Posterior cingulate gyrus (tissue), 11 donors: ENCODE measurements at regions of chrX and their contacts with region 1.

Region 1: DNA sequence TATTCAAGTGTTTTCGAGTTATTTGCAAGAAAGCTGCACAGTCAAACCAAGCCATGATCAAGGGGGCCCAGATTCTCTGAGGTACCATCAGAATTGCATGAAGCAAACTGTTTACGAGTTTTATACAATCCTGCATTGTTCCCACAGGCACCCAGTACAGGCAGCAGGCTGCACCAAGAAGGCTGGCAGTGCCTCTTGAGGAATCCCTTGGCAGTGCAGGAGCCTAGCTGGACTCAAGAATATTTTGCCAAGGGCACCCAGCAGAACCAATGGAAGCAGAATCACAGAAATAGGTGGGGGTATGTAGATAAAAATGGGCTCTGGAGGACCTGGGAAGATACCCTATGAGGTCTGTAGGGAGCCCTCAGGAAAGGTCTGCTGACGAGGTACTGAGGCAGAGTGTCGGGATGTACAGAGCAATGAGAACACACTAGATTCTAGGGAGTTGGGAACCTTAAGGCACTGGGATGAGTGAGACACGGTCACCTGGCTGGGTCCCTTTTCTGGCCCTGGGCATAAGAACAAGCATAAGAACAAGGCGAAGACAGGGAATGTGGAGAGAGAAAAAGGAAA is 2.5 kb upstream of the PLP1 start:
- DNase-seq: peak in 3 of 10 donors; percentile 26 to 87 (median 39)

Region 2: GRCh38 chrX:103704863-103705262 is 69.3 kb before region 1 on chrX:
- intact Hi-C with region 1: loop called (anchors 5 kb)
- DNase-seq: peak; percentile 54 to 97 (median 73)